H1 (cell line): ENCODE measurements at regions of chr17 and their contacts with region 1.

Region 1: GRCh38 chr17:3845621-3846441 is at the start of gene NCBP3:
- DNase-seq: peak; percentile 77 to 91
- H3K4me3 ChIP-seq: peak within 1 kb of the TSS; percentile 84 to 95 (median 90)
- H3K27ac ChIP-seq: peak within 1 kb of the TSS; percentile 91
- H3K4me1 ChIP-seq: 0 out of 7 replicates have a peak, but pooled peaks cover 0 to 3% (median 0%) of the 10 kb centered on the region in 4 experiments
- H3K27me3 ChIP-seq: no peaks in the 10 kb centered on the region
- CTCF ChIP-seq: peak; percentile 80 to 89 (median 86)
- EP300 ChIP-seq: peak in 1 of 2 experiments; percentile 88; a peak in 1 of 3 replicates
- POLR2A ChIP-seq: peak; percentile 86 to 94
- RAD21 ChIP-seq: peak in 1 of 2 experiments; percentile 24; a peak in 1 of 4 replicates
- total RNA-seq, gene NCBP3: 46.1 and 47.9 TPM in 2 replicates

Region 2: GRCh38 chr17:3827124-3827773 is 18.6 kb before region 1 on chr17:
- CTCF ChIA-PET with region 1: interaction called, 42 read pairs
- POLR2A ChIA-PET with region 1: interaction called, 6 read pairs
- DNase-seq: peak in 1 of 2 experiments; percentile 80
- H3K4me3 ChIP-seq: no peak overlapping the region
- H3K27ac ChIP-seq: no peak overlapping the region
- H3K4me1 ChIP-seq: no peaks in the 10 kb centered on the region
- H3K27me3 ChIP-seq: no peaks in the 10 kb centered on the region
- CTCF ChIP-seq: peak; percentile 37 to 87 (median 67)
- EP300 ChIP-seq: no peak
- POLR2A ChIP-seq: no peak
- RAD21 ChIP-seq: peak; percentile 70 to 76; a peak in 3 of 4 replicates

Region 3: GRCh38 chr17:3857121-3858100 is 11.6 kb after region 1 on chr17:
- CTCF ChIA-PET with region 1: interaction called, 40 read pairs
- POLR2A ChIA-PET with region 1: interaction called, 16 read pairs
- DNase-seq: no peak
- H3K4me3 ChIP-seq: no peak overlapping the region
- H3K27ac ChIP-seq: no peak overlapping the region
- H3K4me1 ChIP-seq: no peaks in the 10 kb centered on the region
- H3K27me3 ChIP-seq: no peaks in the 10 kb centered on the region; a peak in 1 of 7 replicates
- CTCF ChIP-seq: peak in 1 of 3 experiments; percentile 10; a peak in 1 of 4 replicates
- EP300 ChIP-seq: no peak
- POLR2A ChIP-seq: no peak
- RAD21 ChIP-seq: no peak

Region 4: GRCh38 chr17:3865176-3865575 is 19.3 kb after region 1 on chr17:
- CTCF ChIA-PET with region 1: interaction called, 39 read pairs
- POLR2A ChIA-PET with region 1: interaction called, 9 read pairs
- DNase-seq: no peak
- H3K4me3 ChIP-seq: no peak overlapping the region
- H3K27ac ChIP-seq: no peak overlapping the region
- H3K4me1 ChIP-seq: no peaks in the 10 kb centered on the region
- H3K27me3 ChIP-seq: no peaks in the 10 kb centered on the region
- CTCF ChIP-seq: no peak
- EP300 ChIP-seq: no peak
- POLR2A ChIP-seq: no peak
- RAD21 ChIP-seq: no peak

Region 5: DNA sequence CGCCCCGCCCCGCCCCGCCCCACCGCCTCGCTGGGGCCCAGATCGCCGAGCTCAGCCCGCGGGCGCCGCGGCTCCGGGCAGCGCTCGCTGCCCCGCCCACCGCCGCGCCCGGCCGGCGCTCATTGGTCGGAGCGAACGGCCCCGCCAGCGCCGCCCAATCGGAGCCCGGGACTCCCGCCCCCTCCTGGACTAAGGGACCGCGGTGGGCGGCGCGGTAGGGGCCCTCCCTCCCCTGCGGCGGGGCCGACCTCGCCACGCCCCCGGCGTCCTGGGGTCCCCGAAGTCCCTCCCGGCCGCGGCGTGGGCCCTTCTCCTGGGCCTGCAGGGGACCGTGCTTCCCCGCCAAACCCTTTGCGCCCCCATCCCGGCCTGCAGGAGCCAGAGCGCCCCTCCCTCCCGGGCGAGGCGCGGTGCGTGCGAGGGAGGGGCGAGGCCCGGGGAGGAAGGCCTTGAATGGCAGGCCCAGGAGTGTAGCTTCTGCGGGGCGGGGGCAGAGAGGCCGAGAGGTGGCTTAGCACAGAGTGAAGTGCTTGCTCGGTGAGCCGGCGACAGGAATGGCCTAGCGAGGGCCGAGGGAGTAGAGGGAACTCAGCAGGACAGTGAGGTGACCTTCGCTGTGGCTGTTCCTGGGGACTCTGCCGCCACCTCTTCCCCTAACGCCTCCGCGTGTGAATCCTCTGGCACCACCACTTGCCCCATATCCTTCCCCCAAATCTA is 47.3 kb after region 1 on chr17 and contains the start of gene CAMKK1:
- CTCF ChIA-PET with region 1: interaction called, 13 read pairs
- POLR2A ChIA-PET with region 1: interaction called, 3 read pairs
- DNase-seq: peak; percentile 44 to 92
- H3K4me3 ChIP-seq: peak within 1 kb of the TSS; percentile 52 to 82 (median 63)
- H3K27ac ChIP-seq: no peak within 1 kb of the TSS; the same call in 1 of the 2 replicates
- H3K4me1 ChIP-seq: peaks cover 6 to 31% (median 21%) of the 10 kb centered on the region in 4 experiments
- H3K27me3 ChIP-seq: peaks cover 0 to 6% (median 1%) of the 10 kb centered on the region in 4 experiments; a peak in 3 of 7 replicates
- CTCF ChIP-seq: no peak
- EP300 ChIP-seq: no peak
- POLR2A ChIP-seq: peak in 1 of 2 experiments; percentile 67; a peak in 2 of 3 replicates
- RAD21 ChIP-seq: no peak
- total RNA-seq, gene CAMKK1: 7.6 and 8.5 TPM in 2 replicates

Region 6: GRCh38 chr17:3907483-3908216 is 61.8 kb after region 1 on chr17:
- CTCF ChIA-PET with region 1: interaction called, 75 read pairs
- POLR2A ChIA-PET with region 1: interaction called, 6 read pairs
- DNase-seq: no peak
- H3K4me3 ChIP-seq: no peak overlapping the region
- H3K27ac ChIP-seq: no peak overlapping the region
- H3K4me1 ChIP-seq: peaks cover 0 to 31% (median 25%) of the 10 kb centered on the region in 4 experiments; a peak in 6 of 7 replicates
- H3K27me3 ChIP-seq: no peaks in the 10 kb centered on the region
- CTCF ChIP-seq: peak; percentile 69 to 75 (median 73)
- EP300 ChIP-seq: no peak
- POLR2A ChIP-seq: no peak
- RAD21 ChIP-seq: peak; percentile 88 to 92